Activated naive CD4-positive, alpha-beta T cell treated with anti-CD3 and anti-CD28 coated beads, Interleukin-2, amount 10 ng/mL, durations not matched to agents 7 days and 5 days (primary cell): ENCODE measurements at regions of chr6 and their contacts with region 1.

Region 1: GRCh38 chr6:107731422-107732319 is 92.4 kb downstream of the SCML4 start:
- DNase-seq: peak; percentile 57
- H3K4me3 Mint-ChIP-seq: peak overlapping the region; percentile 87
- H3K27ac Mint-ChIP-seq: peak overlapping the region; percentile 87
- H3K4me1 Mint-ChIP-seq: peaks cover 89% of the 10 kb centered on the region
- H3K27me3 Mint-ChIP-seq: no peaks in the 10 kb centered on the region

Region 2: GRCh38 chr6:107600936-107601335 is 130.7 kb before region 1 on chr6:
- CTCF ChIA-PET with region 1: no interaction called
- DNase-seq: no peak
- H3K4me3 Mint-ChIP-seq: no peak overlapping the region
- H3K27ac Mint-ChIP-seq: no peak overlapping the region
- H3K4me1 Mint-ChIP-seq: no peaks in the 10 kb centered on the region
- H3K27me3 Mint-ChIP-seq: peaks cover 16% of the 10 kb centered on the region

Region 3: GRCh38 chr6:107624541-107624940 is 107.1 kb before region 1 on chr6:
- CTCF ChIA-PET with region 1: no interaction called
- DNase-seq: no peak
- H3K4me3 Mint-ChIP-seq: no peak overlapping the region
- H3K27ac Mint-ChIP-seq: no peak overlapping the region
- H3K4me1 Mint-ChIP-seq: peaks cover 16% of the 10 kb centered on the region
- H3K27me3 Mint-ChIP-seq: peaks cover 26% of the 10 kb centered on the region

Region 4: DNA sequence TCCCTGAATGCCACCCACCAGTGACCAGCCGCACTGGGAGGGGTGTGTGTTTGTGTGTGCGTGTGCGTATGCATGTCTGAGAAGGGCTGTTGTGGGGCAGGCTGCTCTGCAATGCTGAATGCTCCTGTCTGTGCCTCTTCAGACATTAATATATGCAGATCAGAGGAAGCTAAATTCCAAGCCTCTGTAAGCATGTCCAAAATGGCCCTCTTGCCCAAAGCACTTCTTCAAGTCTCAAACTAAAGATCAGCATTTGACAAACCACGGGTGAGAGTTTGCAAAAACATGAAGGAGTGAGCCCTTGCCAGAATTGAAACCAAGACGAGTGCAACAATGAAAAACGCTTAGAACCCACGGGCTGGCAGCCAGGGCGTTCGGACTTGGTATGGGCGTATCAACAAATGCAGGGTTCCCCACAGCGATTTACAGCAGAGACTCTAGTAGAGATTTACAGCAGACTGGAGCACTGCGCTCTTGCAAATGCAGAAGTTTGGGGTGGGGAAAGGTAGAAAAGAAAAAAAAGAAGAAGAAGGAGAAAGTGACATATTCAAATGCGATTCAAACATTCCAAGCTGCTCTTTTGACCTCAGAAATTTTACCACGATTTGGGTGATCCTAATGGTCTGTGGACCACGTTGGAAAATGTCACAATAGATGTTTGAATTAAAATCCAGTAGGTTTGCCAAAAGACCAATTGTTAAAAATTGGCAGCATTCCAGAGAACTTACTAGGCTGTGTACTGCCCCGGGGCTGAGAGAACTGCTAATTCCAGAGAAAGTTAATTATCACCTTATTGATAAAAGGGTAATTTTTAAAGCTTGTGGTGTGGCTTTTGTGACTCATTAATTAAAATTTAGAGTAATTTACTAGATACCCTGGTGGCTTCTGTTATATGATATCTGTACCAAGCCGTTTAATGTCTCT is 88.9 kb after region 1 on chr6:
- CTCF ChIA-PET with region 1: interaction called, 20 read pairs
- DNase-seq: peak; percentile 70
- H3K4me3 Mint-ChIP-seq: peak overlapping the region; percentile 92
- H3K27ac Mint-ChIP-seq: peak overlapping the region; percentile 100
- H3K4me1 Mint-ChIP-seq: peaks cover 85% of the 10 kb centered on the region
- H3K27me3 Mint-ChIP-seq: no peaks in the 10 kb centered on the region

Region 5: DNA sequence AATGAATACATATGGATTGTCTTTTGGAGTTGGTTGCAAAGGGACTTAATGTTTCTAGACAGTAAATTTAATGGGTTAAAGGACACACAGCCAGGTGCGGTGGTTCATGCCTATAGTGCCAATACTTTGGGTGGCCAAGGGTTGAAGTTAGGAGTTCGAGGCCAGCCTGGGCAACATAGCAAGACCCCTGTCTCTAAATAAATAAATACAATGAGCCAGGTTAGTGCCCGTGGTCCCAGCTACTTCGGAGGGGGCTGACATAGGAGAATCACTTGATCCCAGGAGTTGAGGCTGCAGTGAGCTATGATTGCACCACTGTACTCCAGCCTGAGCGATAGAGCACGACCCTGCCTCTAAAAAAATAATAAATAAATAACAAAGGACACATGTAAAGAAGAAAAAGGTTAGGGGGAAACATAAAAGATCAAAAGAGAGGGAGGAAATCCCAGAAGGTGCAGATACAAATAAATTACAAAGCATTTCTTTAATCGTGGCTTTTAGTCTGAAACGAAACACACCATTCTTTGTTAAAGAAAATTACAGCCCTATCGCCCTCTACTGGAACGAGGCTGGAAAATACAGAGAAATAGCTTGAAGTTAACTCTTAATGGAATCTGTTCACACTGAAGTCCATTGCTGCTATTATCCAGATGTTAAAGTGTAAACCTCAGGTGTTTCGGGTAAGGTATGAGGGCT is 135.1 kb after region 1 on chr6:
- CTCF ChIA-PET with region 1: interaction called, 53 read pairs
- DNase-seq: peak; percentile 56
- H3K4me3 Mint-ChIP-seq: no peak overlapping the region
- H3K27ac Mint-ChIP-seq: no peak overlapping the region
- H3K4me1 Mint-ChIP-seq: peaks cover 12% of the 10 kb centered on the region
- H3K27me3 Mint-ChIP-seq: peaks cover 8% of the 10 kb centered on the region